Endothelial cell of umbilical vein (primary cell): ENCODE measurements at regions of chr2 and their contacts with region 1.

Region 1: GRCh38 chr2:236001166-236001828 is 166.9 kb downstream of the GBX2 start:
- DNase-seq: peak; percentile 85
- H3K4me3 ChIP-seq: peak overlapping the region in 1 of 3 experiments; percentile 48
- H3K27ac ChIP-seq: peak overlapping the region; percentile 90
- H3K4me1 ChIP-seq: peaks cover 11% of the 10 kb centered on the region
- H3K27me3 ChIP-seq: no peaks in the 10 kb centered on the region
- CTCF ChIP-seq: no peak
- POLR2A ChIP-seq: peak; percentile 28

Region 2: DNA sequence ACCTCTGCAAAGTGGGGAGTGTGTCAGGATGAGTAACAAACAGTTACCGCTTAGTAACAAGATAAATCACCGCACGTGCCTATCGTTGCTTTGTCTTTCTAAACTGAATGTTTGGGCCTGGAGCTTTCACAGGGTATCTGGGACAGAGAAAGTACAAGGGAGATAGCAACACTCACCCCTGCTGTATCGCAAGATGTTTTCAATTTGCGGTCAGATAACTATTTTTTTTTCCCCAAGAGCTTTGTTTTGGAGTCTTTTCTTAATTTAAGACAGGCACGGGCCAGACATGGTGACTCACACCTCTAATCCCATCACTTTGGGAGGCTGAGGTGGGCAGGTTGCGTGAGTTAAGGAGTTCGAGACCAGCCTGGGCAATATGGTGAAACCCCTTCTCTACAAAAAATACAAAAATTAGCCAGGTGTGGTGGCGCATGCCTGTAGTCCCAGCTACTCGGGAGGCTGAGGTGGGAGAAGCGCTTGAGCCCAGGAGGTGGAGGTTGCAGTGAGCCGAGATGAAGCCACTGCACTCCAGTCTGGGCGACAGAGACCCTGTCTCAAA is 20.3 kb after region 1 on chr2:
- CTCF ChIA-PET with region 1: no interaction called
- POLR2A ChIA-PET with region 1: no interaction called
- dilution Hi-C with region 1: no loop called
- intact Hi-C with region 1: loop called (anchors 2 kb)
- DNase-seq: no peak
- H3K4me3 ChIP-seq: no peak overlapping the region
- H3K27ac ChIP-seq: no peak overlapping the region
- H3K4me1 ChIP-seq: no peaks in the 10 kb centered on the region
- H3K27me3 ChIP-seq: no peaks in the 10 kb centered on the region
- CTCF ChIP-seq: no peak
- POLR2A ChIP-seq: no peak